ENCODE measurements at regions of chr11 and their contacts with region 1.

Region 1: DNA sequence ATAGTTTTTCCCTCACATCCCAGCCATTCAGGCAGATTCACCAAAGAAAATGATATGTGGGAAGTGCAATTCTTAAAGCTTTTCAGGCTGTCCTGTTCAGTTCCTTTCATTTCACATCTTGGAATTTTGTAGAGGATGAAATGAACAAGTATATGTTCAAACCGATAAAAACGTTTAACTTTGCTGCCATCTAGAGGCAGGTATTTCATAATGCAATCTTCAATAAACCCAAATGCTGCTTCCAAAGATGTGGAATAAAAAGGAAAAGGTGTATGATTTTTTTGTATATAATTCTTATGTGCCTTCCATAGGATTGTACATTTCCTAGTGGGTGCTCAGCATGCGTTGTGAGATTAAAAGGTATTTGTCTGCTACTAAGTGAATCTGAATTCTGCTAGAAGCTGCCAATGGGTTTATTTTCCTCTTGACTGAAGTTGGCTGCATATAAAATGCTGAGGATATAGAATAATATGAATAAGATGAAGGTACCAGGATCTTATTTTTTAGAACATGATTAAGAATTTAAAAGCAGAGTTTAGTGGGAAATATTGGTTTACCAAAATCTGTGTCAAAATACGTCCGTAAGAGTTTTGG is 199.3 kb downstream of the PGR start:
- DNase-seq: no peak
- H3K4me3 ChIP-seq: no peak overlapping the region
- CTCF ChIP-seq: no peak
- POLR2A ChIP-seq: no peak

Region 2: GRCh38 chr11:100575870-100576705 is 354.2 kb before region 1 on chr11:
- intact Hi-C with region 1: loop called (anchors 5 kb)
- DNase-seq: no peak
- H3K4me3 ChIP-seq: no peak overlapping the region
- CTCF ChIP-seq: no peak
- POLR2A ChIP-seq: no peak

Region 3: DNA sequence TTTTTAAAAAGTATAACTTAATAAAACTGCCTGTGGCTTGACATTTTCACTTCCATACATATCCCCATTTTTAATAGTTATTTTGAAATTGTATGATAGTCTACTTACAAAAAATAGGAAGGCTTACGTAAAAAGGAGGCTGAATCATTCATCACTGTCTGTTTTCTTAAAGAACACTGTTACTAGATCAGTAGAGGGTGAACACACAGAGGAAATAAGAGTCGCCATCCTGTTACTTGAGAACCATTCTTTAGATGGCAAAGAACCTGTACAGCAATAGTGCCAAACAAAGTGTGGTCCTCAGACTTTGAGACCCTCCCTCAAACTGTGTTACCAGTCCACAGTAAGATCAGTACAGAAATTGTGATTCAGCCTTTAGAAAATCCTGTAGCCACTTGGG is 18.7 kb after region 1 on chr11:
- intact Hi-C with region 1: no loop called
- DNase-seq: no peak
- H3K4me3 ChIP-seq: no peak overlapping the region
- CTCF ChIP-seq: no peak
- POLR2A ChIP-seq: no peak